Activated CD8-positive, alpha-beta T cell treated with anti-CD3 and anti-CD28 coated beads for 36 hours (primary cell): ENCODE measurements at regions of chr5 and their contacts with region 1.

Region 1: GRCh38 chr5:111762895-111763294 is 5.9 kb upstream of the NREP start:
- DNase-seq: no peak
- ATAC-seq: no peak
- H3K4me3 Mint-ChIP-seq: no peak overlapping the region
- H3K27ac Mint-ChIP-seq: no peak overlapping the region
- H3K4me1 Mint-ChIP-seq: peaks cover 4% of the 10 kb centered on the region
- H3K27me3 Mint-ChIP-seq: no peaks in the 10 kb centered on the region
- CTCF ChIP-seq: no peak

Region 2: GRCh38 chr5:112154940-112155686 is 392.2 kb after region 1 on chr5:
- CTCF ChIA-PET with region 1: no interaction called
- POLR2A ChIA-PET with region 1: interaction called, 8 read pairs
- intact Hi-C with region 1: loop called (anchors 10 kb)
- DNase-seq: peak; percentile 20
- ATAC-seq: peak; percentile 86
- H3K4me3 Mint-ChIP-seq: no peak overlapping the region
- H3K27ac Mint-ChIP-seq: peak overlapping the region; percentile 16
- H3K4me1 Mint-ChIP-seq: peaks cover 11% of the 10 kb centered on the region
- H3K27me3 Mint-ChIP-seq: no peaks in the 10 kb centered on the region
- CTCF ChIP-seq: no peak